PC-9 (cell line): ENCODE measurements at regions of chr7 and their contacts with region 1.

Region 1: DNA sequence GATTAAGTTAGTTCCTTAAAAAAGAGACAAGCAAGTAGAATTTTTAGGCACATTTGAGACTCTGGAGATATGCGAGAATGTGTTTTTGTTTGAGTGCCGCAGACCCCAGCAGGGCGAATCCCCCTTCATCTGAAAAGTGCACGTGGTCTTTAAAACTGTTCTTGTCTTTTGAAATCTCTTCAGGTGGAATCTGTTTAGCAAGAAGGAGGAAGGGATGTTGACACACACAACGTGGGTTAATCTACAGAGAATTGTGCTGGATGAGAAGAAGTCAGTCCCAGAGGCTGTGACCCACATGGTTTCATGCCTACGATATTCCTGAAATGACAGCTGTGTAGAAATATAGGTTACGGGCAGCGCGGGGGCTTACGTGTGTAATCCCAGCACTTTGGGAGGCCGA is 27.1 kb upstream of the ZFAND2A start:
- DNase-seq: no peak
- H3K4me3 ChIP-seq: no peak overlapping the region
- H3K27ac ChIP-seq: no peak overlapping the region
- H3K4me1 ChIP-seq: no peaks in the 10 kb centered on the region
- H3K27me3 ChIP-seq: peaks cover 90% of the 10 kb centered on the region
- CTCF ChIP-seq: no peak

Region 2: GRCh38 chr7:1112625-1113547 is 74.2 kb before region 1 on chr7:
- CTCF ChIA-PET with region 1: interaction called, 12 read pairs
- POLR2A ChIA-PET with region 1: no interaction called
- intact Hi-C with region 1: no loop called
- DNase-seq: no peak
- H3K4me3 ChIP-seq: no peak overlapping the region
- H3K27ac ChIP-seq: no peak overlapping the region
- H3K4me1 ChIP-seq: no peaks in the 10 kb centered on the region
- H3K27me3 ChIP-seq: no peaks in the 10 kb centered on the region
- CTCF ChIP-seq: no peak

Region 3: DNA sequence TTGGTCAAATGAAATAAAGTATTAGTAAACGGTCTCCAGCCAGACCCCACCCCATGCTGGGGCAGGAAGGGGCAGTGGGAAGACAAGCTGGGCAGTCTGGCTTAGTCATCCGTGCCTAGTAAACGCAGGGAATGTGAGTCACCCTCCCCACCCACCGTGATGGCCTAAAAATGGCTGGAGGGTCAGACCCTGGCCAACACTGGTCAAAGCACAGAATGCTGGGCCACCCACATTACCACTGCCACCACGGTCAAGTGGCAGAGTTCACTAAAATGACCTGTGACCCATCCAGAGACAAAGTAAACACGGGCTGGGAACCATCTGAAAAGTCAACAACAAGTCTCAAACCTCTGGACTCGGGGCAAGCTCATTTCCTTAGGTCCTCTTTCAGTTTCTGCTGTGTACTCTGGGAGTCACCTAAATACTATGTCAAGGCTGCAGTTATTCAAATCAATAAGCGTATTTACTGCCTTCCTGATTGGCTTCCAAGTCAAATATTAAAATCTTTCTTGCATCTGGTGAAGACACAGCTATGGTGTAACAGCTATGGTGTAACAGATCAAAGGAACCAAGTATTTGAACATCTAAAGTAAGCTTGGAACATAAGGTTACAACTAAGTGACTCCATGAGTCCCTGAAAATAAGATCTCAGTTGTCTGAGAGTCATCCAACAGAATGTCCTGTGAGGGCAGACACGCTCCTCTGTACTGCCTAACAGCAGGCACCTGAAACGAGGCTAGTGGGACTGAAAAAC is 30.2 kb before region 1 on chr7:
- CTCF ChIA-PET with region 1: no interaction called
- POLR2A ChIA-PET with region 1: no interaction called
- intact Hi-C with region 1: no loop called
- DNase-seq: peak; percentile 93 to 100
- H3K4me3 ChIP-seq: peak overlapping the region; percentile 96; the same call in 1 of the 2 replicates
- H3K27ac ChIP-seq: peak overlapping the region; percentile 77
- H3K4me1 ChIP-seq: peaks cover 45% of the 10 kb centered on the region
- H3K27me3 ChIP-seq: no peaks in the 10 kb centered on the region
- CTCF ChIP-seq: no peak